ENCODE measurements at regions of chr16 and their contacts with region 1.

Region 1: DNA sequence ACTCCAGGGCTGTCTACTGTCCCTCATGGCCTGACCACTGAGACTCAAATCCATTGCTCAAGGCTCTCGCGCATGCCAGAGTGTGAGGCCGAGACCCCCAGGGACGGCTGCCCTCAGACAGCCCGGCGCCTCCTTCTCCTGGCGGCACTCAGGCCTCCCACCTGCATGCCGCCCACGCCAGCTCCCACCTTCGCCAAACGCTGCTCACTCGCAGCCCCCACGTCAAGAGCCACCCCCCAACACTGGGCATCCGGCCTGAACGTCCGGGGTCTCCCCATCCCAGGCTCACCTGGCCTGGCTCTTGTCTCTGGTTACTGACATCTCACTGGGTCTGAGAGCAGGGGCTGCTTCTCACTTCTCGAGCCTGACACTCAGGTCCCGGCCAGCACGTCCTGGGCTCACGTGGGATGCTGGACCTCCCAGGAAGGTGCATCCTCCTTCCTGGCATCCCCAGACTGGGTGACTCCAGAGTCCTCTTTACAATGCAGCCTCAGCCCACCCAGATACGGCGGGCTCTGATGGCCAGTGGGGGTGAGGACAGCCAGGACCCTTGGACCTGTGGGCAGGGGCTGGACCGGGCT is 12.2 kb upstream of the CACNA1H start:
- DNase-seq: no peak
- ATAC-seq: no peak
- H3K4me3 ChIP-seq: no peak overlapping the region
- H3K27ac ChIP-seq: no peak overlapping the region
- H3K4me1 ChIP-seq: peaks cover 12% of the 10 kb centered on the region
- H3K27me3 ChIP-seq: no peaks in the 10 kb centered on the region
- CTCF ChIP-seq: no peak

Region 2: DNA sequence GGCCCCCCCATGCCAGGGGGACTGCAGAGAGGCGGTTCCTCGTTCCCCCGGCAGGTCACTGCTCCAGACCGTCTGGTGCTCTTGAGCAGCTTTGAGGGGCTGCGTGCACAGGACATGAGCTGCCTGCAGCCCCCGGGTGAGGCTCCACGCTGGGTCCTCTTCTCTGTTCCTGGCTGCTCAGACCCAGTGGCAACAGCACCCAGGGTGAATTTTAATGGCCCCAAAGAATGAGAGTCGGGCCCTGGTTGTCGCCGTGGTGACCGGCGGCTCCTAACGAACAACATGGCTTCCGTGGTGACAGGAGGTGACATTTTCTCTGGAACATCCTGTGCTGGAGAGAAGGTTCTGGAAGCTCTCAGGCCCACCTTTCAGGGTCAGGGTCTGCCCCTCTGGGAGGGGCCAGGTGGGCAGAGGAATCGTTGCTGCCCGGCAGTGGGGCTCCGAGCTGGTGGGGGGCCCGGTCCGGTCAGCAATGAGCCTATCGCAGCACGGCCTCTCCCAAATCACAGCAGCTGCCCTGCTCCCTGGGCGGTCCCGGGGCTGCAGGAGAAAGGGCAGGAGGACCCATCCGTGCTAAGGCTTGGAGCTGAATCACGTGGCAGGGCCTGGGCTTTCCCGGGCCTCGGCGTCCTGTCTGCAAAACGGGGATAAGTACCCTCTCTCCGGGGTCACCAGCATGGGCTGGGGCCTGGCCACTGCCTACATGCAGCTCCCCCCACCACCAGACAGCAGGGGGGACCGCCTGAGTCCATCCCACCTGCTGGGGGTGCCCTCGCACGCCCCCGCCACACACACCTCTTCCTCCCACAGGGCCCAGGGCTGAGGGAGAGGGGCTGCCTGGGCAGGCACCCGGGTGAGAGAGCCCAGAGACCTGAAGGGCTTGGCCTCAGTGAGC is 41.2 kb before region 1 on chr16:
- CTCF ChIA-PET with region 1: interaction called, 11 read pairs
- POLR2A ChIA-PET with region 1: no interaction called
- in situ Hi-C with region 1: no loop called
- intact Hi-C with region 1: no loop called
- DNase-seq: no peak
- ATAC-seq: no peak
- H3K4me3 ChIP-seq: no peak overlapping the region
- H3K27ac ChIP-seq: no peak overlapping the region
- H3K4me1 ChIP-seq: peaks cover 40% of the 10 kb centered on the region
- H3K27me3 ChIP-seq: no peaks in the 10 kb centered on the region
- CTCF ChIP-seq: no peak

Region 3: DNA sequence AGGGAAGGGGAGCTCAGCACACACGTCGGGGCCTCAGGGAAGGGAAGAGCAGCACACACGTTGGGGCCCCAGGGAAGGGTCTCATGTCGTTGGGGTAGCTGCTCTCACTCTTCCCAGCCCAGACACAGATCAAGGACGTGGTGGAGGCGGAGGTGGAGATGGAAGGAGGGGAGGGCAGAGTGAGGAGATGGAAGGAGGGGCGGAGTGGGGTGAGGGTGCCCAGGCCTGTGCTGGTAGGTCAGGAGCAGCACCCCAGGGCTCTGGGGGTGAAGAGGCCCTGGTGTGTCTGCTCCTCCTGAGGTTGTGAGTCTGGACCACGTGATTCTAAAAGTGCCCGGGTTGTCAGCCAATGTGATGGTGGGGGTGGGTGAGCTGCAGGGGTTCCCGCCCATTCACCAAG is 319.3 kb after region 1 on chr16:
- CTCF ChIA-PET with region 1: no interaction called
- POLR2A ChIA-PET with region 1: interaction called, 17 read pairs
- in situ Hi-C with region 1: no loop called
- intact Hi-C with region 1: no loop called
- DNase-seq: no peak
- ATAC-seq: no peak
- H3K4me3 ChIP-seq: no peak overlapping the region
- H3K27ac ChIP-seq: no peak overlapping the region
- H3K4me1 ChIP-seq: no peaks in the 10 kb centered on the region
- H3K27me3 ChIP-seq: no peaks in the 10 kb centered on the region
- CTCF ChIP-seq: no peak

Region 4: GRCh38 chr16:1556254-1556653 is 415.6 kb after region 1 on chr16:
- CTCF ChIA-PET with region 1: no interaction called
- POLR2A ChIA-PET with region 1: no interaction called
- in situ Hi-C with region 1: no loop called
- intact Hi-C with region 1: no loop called
- DNase-seq: no peak
- ATAC-seq: no peak
- H3K4me3 ChIP-seq: no peak overlapping the region
- H3K27ac ChIP-seq: no peak overlapping the region
- H3K4me1 ChIP-seq: no peaks in the 10 kb centered on the region
- H3K27me3 ChIP-seq: no peaks in the 10 kb centered on the region
- CTCF ChIP-seq: no peak

Measured in Panc1 (cell line).